Panc1 (cell line): ENCODE measurements at regions of chrX and their contacts with region 1.

Region 1: GRCh38 chrX:107439477-107439876 is 10.0 kb upstream of the FRMPD3 start:
- DNase-seq: no peak
- ATAC-seq: no peak
- H3K4me3 ChIP-seq: no peak overlapping the region
- H3K27ac ChIP-seq: no peak overlapping the region
- H3K4me1 ChIP-seq: no peaks in the 10 kb centered on the region
- H3K27me3 ChIP-seq: no peaks in the 10 kb centered on the region
- CTCF ChIP-seq: no peak

Region 2: GRCh38 chrX:107025545-107025944 is 413.9 kb before region 1 on chrX:
- CTCF ChIA-PET with region 1: no interaction called
- POLR2A ChIA-PET with region 1: no interaction called
- in situ Hi-C with region 1: no loop called
- intact Hi-C with region 1: loop called (anchors 10 kb)
- DNase-seq: peak; percentile 28
- ATAC-seq: peak; percentile 83
- H3K4me3 ChIP-seq: no peak overlapping the region
- H3K27ac ChIP-seq: no peak overlapping the region
- H3K4me1 ChIP-seq: no peaks in the 10 kb centered on the region
- H3K27me3 ChIP-seq: no peaks in the 10 kb centered on the region
- CTCF ChIP-seq: peak; percentile 75

Region 3: DNA sequence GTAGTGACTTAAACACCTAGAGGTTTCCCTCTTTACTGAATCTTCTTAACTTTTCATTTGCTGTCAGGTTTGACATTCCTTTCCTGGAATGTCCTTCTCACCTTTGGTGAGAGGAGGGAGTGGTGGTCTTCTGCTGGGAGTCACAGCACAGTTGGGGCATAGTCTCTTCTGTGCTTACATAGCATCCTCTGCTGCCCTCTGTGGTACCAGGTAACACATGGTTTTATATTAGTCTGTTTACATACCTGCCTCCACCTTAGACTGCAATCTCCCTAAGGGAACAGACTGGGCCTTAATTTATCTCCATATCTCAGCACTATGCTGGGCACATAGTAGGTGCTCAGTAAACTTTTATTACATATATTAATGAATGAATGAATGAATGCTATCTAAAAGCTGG is 70.1 kb after region 1 on chrX:
- CTCF ChIA-PET with region 1: no interaction called
- POLR2A ChIA-PET with region 1: no interaction called
- in situ Hi-C with region 1: no loop called
- intact Hi-C with region 1: no loop called
- DNase-seq: no peak
- ATAC-seq: no peak
- H3K4me3 ChIP-seq: no peak overlapping the region
- H3K27ac ChIP-seq: no peak overlapping the region
- H3K4me1 ChIP-seq: no peaks in the 10 kb centered on the region; the same call in 1 of the 2 replicates
- H3K27me3 ChIP-seq: peaks cover 7% of the 10 kb centered on the region
- CTCF ChIP-seq: no peak